BJ (cell line): ENCODE measurements at regions of chr15 and their contacts with region 1.

Region 1: DNA sequence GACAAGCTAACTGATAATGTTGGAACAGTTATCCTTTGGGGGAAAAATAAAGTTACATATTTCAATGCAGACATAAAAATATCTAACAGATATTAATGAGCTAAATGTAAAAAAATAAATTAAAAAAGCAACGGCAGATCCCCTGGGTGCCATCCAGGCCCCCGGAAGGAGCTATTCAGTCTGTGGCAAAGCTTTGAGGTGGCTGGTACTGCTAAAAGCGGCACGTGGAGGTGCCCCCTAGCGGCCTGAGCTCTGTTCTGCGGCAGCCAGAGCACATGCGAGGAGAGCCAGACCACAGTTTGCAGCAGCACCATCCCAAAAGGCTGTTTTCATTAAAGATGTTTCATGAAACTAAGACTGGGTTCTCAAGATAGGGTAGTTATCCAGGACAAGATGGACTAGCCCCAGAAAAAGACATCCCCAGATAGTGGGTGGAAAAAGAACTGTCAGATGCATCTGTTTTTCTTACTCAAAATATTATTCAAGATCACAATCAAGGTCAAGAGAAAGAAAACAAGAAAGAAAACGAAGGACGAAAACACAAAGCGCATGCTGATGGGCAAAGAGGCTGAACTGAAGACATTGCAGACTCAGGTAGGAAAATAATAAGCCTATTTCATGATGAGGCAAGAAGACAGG is 18.7 kb downstream of the AP3S2 start:
- DNase-seq: no peak
- H3K4me3 ChIP-seq: no peak overlapping the region
- H3K27me3 ChIP-seq: no peaks in the 10 kb centered on the region
- CTCF ChIP-seq: peak; percentile 98

Region 2: GRCh38 chr15:89760303-89761008 is 114.6 kb before region 1 on chr15:
- CTCF ChIA-PET with region 1: interaction called, 221 read pairs
- POLR2A ChIA-PET with region 1: interaction called, 5 read pairs
- DNase-seq: no peak
- H3K4me3 ChIP-seq: no peak overlapping the region
- H3K27me3 ChIP-seq: no peaks in the 10 kb centered on the region
- CTCF ChIP-seq: peak; percentile 98

Region 3: GRCh38 chr15:89781891-89782618 is 93.0 kb before region 1 on chr15:
- CTCF ChIA-PET with region 1: interaction called, 11 read pairs
- POLR2A ChIA-PET with region 1: no interaction called
- DNase-seq: no peak
- H3K4me3 ChIP-seq: no peak overlapping the region
- H3K27me3 ChIP-seq: no peaks in the 10 kb centered on the region
- CTCF ChIP-seq: no peak

Region 4: DNA sequence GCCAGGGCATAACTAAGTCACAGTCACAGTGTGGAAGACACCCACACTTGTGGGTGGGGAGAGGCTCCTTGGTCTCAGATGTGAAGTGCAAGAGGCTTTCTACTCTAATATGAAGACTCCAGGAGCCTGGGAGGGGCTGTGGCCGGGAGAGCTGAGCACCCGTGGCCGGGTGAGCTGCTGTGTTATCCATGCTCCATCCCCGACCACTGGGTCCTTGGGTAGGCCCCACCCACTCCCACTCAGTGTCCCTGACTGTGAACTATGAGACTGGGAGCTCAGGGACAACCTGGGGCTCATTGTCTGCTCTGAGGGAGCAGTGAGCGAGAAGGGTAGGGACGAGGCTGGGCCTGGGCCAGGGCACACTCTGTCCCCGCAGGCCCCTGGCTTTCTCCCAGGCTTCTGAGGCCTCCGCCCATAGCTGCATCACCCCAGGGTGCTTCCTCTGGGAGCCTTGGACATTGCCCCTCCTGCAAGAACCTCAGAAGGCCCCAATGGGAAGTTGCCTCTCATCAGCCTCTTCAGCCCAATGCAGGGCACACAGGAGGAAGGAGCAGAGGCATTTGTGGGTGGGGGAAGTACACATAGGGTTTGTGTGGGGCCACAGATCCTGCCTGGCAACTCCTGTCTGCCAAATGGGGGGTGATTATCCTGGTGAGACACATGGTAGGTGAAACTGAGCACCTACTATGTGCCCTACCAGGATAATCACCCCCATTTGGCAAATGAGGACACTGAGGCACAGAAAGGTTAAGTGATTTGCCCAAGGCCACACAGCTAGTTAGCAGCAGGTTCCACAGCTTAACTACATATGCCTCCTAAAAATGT is 62.8 kb before region 1 on chr15:
- CTCF ChIA-PET with region 1: interaction called, 16 read pairs
- POLR2A ChIA-PET with region 1: no interaction called
- DNase-seq: no peak
- H3K4me3 ChIP-seq: peak overlapping the region; percentile 80
- H3K27me3 ChIP-seq: no peaks in the 10 kb centered on the region
- CTCF ChIP-seq: no peak

Region 5: GRCh38 chr15:90031231-90031791 is 156.3 kb after region 1 on chr15:
- CTCF ChIA-PET with region 1: no interaction called
- POLR2A ChIA-PET with region 1: no interaction called
- DNase-seq: no peak
- H3K4me3 ChIP-seq: no peak overlapping the region
- H3K27me3 ChIP-seq: no peaks in the 10 kb centered on the region
- CTCF ChIP-seq: no peak